ENCODE measurements at regions of chr2 and their contacts with region 1.

Region 1: DNA sequence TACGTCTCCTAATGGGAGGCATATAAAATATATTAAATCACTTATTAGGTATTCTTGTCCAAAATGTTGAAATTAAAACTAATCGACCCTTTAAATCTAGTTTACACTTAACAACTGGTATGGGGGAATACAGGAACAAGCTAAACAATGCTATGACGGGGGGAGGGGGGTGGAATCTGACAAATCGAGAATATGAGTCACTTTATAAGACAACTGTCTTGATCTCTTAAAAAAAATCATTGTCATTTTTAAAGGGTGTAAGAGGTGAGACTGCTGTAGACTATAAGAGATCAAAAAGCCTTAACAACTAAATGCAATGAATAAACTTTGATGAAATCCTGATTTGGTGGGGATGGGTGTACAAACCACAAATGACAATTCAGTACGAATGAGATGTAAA is 6.0 kb downstream of the MAP3K2 start:
- DNase-seq: no peak
- ATAC-seq: peak in 1 of 4 experiments; percentile 33
- H3K4me3 ChIP-seq: no peak overlapping the region
- H3K4me3 Mint-ChIP-seq: no peak overlapping the region
- H3K27ac ChIP-seq: no peak overlapping the region
- H3K27ac Mint-ChIP-seq: no peak overlapping the region
- H3K4me1 ChIP-seq: peaks cover 12 to 18% of the 10 kb centered on the region in 2 experiments
- H3K4me1 Mint-ChIP-seq: peaks cover 81 to 91% (median 83%) of the 10 kb centered on the region in 3 donors
- H3K27me3 ChIP-seq: no peaks in the 10 kb centered on the region
- H3K27me3 Mint-ChIP-seq: no peaks in the 10 kb centered on the region

Region 2: GRCh38 chr2:127324635-127325034 is 57.1 kb before region 1 on chr2:
- CTCF ChIA-PET with region 1: interaction called, 3 read pairs
- POLR2A ChIA-PET with region 1: interaction called in 1 of 2 experiments, 20 read pairs
- DNase-seq: peak in 1 of 35 experiments; percentile 28
- ATAC-seq: no peak
- H3K4me3 ChIP-seq: no peak overlapping the region
- H3K4me3 Mint-ChIP-seq: no peak overlapping the region
- H3K27ac ChIP-seq: no peak overlapping the region
- H3K27ac Mint-ChIP-seq: no peak overlapping the region
- H3K4me1 ChIP-seq: no peaks in the 10 kb centered on the region
- H3K4me1 Mint-ChIP-seq: no peaks in the 10 kb centered on the region
- H3K27me3 ChIP-seq: no peaks in the 10 kb centered on the region
- H3K27me3 Mint-ChIP-seq: no peaks in the 10 kb centered on the region

Region 3: GRCh38 chr2:127365211-127365643 is 16.5 kb before region 1 on chr2:
- CTCF ChIA-PET with region 1: no interaction called
- POLR2A ChIA-PET with region 1: interaction called, 5 to 13 read pairs
- DNase-seq: peak in 1 of 35 experiments; percentile 12
- ATAC-seq: peak; percentile 33 to 58 (median 49)
- H3K4me3 ChIP-seq: no peak overlapping the region
- H3K4me3 Mint-ChIP-seq: no peak overlapping the region
- H3K27ac ChIP-seq: no peak overlapping the region
- H3K27ac Mint-ChIP-seq: peak overlapping the region in 1 of 2 donors; percentile 75
- H3K4me1 ChIP-seq: peaks cover 4 to 15% of the 10 kb centered on the region in 2 experiments
- H3K4me1 Mint-ChIP-seq: peaks cover 62 to 77% (median 70%) of the 10 kb centered on the region in 3 donors
- H3K27me3 ChIP-seq: no peaks in the 10 kb centered on the region
- H3K27me3 Mint-ChIP-seq: no peaks in the 10 kb centered on the region

Measured in T-cell (primary cell).